Right cardiac atrium (tissue), 5 donors: ENCODE measurements at regions of chr10 and their contacts with region 1.

Region 1: DNA sequence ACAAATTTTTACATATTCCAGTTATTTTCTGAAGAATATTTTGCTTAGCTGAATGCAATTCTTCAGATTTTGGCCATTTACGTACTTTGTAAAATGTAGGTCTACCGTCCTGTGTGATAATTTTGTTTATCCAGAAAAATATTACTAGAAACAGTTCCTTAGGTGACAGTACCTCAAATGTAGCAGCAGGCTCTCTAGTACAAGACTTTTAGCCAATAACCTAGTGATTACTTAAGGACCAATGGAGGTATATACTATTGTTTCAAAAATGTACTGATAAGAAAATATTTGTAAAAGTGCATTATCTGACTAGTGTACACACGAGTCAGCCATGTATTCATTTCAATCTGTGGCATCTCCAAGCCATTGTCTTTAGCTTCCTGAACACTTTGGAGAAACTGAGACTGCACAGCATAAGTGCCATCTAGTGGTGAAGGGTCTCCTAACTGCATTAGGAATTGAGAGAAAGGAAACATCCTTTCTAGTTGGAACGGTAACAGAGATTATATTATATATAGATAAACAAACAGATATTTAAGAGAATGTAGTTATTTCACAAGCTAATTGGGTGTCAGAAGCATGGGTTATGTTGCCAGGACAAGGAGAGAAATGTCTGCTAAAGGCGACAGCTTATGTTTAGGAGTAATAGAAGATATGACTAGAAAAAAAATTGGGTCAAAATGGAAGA is 23.7 kb downstream of the RTKN2 start:
- DNase-seq: no peak
- ATAC-seq: peak; percentile 75 to 81
- H3K4me3 ChIP-seq: no peak overlapping the region
- H3K27ac ChIP-seq: no peak overlapping the region
- H3K4me1 ChIP-seq: no peaks in the 10 kb centered on the region
- H3K27me3 ChIP-seq: no peaks in the 10 kb centered on the region

Region 2: GRCh38 chr10:62038609-62039190 is 206.2 kb before region 1 on chr10:
- intact Hi-C with region 1: loop called (anchors 2 to 5 kb)
- DNase-seq: peak; percentile 66 to 84 (median 75)
- ATAC-seq: peak; percentile 64 to 67
- H3K4me3 ChIP-seq: peak overlapping the region; percentile 35
- H3K27ac ChIP-seq: no peak overlapping the region
- H3K4me1 ChIP-seq: no peaks in the 10 kb centered on the region
- H3K27me3 ChIP-seq: no peaks in the 10 kb centered on the region

Region 3: DNA sequence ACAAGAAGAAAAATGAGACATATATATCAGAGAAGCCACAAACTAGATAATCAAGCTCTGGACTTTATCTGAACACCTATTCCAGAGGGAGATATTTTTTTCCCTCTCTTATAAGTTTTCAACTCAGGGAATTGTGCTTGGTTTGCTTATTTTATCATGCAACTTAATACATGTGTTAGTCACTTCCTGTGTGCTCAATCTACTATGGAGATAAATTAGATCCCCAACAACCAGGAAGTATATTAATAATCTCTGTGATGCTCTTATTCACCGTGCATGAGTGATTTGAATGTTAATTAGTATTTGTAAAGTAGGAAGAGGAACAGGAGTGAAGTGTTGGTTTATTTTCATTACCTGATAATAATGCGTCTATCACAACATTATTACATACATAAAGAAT is 90.4 kb after region 1 on chr10:
- intact Hi-C with region 1: no loop called
- DNase-seq: no peak
- ATAC-seq: no peak
- H3K4me3 ChIP-seq: no peak overlapping the region
- H3K27ac ChIP-seq: no peak overlapping the region
- H3K4me1 ChIP-seq: no peaks in the 10 kb centered on the region
- H3K27me3 ChIP-seq: no peaks in the 10 kb centered on the region

Region 4: GRCh38 chr10:62870866-62871265 is 625.9 kb after region 1 on chr10:
- intact Hi-C with region 1: no loop called
- DNase-seq: no peak
- ATAC-seq: no peak
- H3K4me3 ChIP-seq: no peak overlapping the region
- H3K27ac ChIP-seq: no peak overlapping the region
- H3K4me1 ChIP-seq: no peaks in the 10 kb centered on the region
- H3K27me3 ChIP-seq: no peaks in the 10 kb centered on the region